HepG2 (cell line): ENCODE measurements at regions of chr3 and their contacts with region 1.

Region 1: GRCh38 chr3:113552851-113553250 is 20.5 kb downstream of the SIDT1 start:
- DNase-seq: no peak
- ATAC-seq: peak; percentile 53
- H3K4me3 ChIP-seq: no peak overlapping the region
- H3K27ac ChIP-seq: no peak overlapping the region
- H3K4me1 ChIP-seq: peaks cover 63% of the 10 kb centered on the region
- H3K27me3 ChIP-seq: no peaks in the 10 kb centered on the region; a peak in 1 of 5 replicates
- CTCF ChIP-seq: peak; percentile 59
- EP300 ChIP-seq: no peak
- POLR2A ChIP-seq: no peak
- RAD21 ChIP-seq: 0 out of 2 replicates have a peak, but pooled peaks have one; percentile 20

Region 2: GRCh38 chr3:113531826-113532697 is 20.8 kb before region 1 on chr3 and contains the start of gene SIDT1:
- CTCF ChIA-PET with region 1: no interaction called
- POLR2A ChIA-PET with region 1: no interaction called
- in situ Hi-C with region 1: no loop called
- intact Hi-C with region 1: loop called (anchors 2 kb)
- DNase-seq: no peak
- ATAC-seq: peak; percentile 72
- H3K4me3 ChIP-seq: peak within 1 kb of the TSS; percentile 50 to 72 (median 61)
- H3K27ac ChIP-seq: no peak within 1 kb of the TSS
- H3K4me1 ChIP-seq: peaks cover 16% of the 10 kb centered on the region
- H3K27me3 ChIP-seq: peaks cover 1 to 44% of the 10 kb centered on the region in 2 experiments; a peak in 3 of 5 replicates
- CTCF ChIP-seq: no peak
- EP300 ChIP-seq: no peak
- POLR2A ChIP-seq: no peak
- RAD21 ChIP-seq: no peak
- total RNA-seq, gene SIDT1: 0.07 TPM in 1 of 2 replicates, not detected in the other

Region 3: DNA sequence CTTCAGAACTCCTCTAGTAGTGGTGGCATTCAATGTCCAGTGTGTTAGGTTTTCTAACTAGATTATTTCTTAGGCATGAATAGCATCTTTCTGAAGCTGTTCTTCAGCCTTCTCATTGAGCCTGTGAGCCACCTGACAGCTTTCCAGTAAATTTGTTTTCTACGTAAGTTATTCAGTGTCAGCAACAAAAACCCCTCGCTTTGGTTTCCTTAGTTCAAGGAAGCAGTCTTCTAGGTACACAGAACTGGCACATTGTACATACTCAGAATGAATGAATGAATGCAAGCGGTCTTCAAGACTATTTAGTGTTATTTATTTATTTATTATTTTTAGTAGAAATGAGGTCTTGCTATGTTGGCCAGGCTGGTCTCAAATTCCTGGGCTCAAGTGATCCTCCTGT is 581.1 kb after region 1 on chr3:
- CTCF ChIA-PET with region 1: no interaction called
- POLR2A ChIA-PET with region 1: no interaction called
- in situ Hi-C with region 1: no loop called
- intact Hi-C with region 1: no loop called
- DNase-seq: no peak
- ATAC-seq: no peak
- H3K4me3 ChIP-seq: no peak overlapping the region
- H3K27ac ChIP-seq: no peak overlapping the region
- H3K4me1 ChIP-seq: no peaks in the 10 kb centered on the region
- H3K27me3 ChIP-seq: peaks cover 0 to 4% of the 10 kb centered on the region in 2 experiments; a peak in 1 of 5 replicates
- CTCF ChIP-seq: no peak
- EP300 ChIP-seq: no peak
- POLR2A ChIP-seq: no peak
- RAD21 ChIP-seq: no peak

Region 4: GRCh38 chr3:114223143-114223542 is 670.3 kb after region 1 on chr3:
- CTCF ChIA-PET with region 1: no interaction called
- POLR2A ChIA-PET with region 1: no interaction called
- in situ Hi-C with region 1: no loop called
- intact Hi-C with region 1: no loop called
- DNase-seq: no peak
- ATAC-seq: no peak
- H3K4me3 ChIP-seq: no peak overlapping the region
- H3K27ac ChIP-seq: no peak overlapping the region
- H3K4me1 ChIP-seq: no peaks in the 10 kb centered on the region
- H3K27me3 ChIP-seq: peaks cover 0 to 12% of the 10 kb centered on the region in 2 experiments; a peak in 1 of 5 replicates
- CTCF ChIP-seq: no peak
- EP300 ChIP-seq: no peak
- POLR2A ChIP-seq: no peak
- RAD21 ChIP-seq: no peak